Ascending aorta (tissue), 2 donors: ENCODE measurements at regions of chr9 and their contacts with region 1.

Region 1: GRCh38 chr9:101848485-101848919 is 110.1 kb upstream of the GRIN3A start:
- DNase-seq: no peak
- H3K4me3 ChIP-seq: no peak overlapping the region
- H3K27ac ChIP-seq: no peak overlapping the region
- H3K4me1 ChIP-seq: no peaks in the 10 kb centered on the region
- H3K27me3 ChIP-seq: no peaks in the 10 kb centered on the region
- CTCF ChIP-seq: no peak

Region 2: GRCh38 chr9:101449140-101449721 is 399.3 kb before region 1 on chr9:
- intact Hi-C with region 1: no loop called
- DNase-seq: peak in 1 of 2 donors; percentile 78
- H3K4me3 ChIP-seq: peak overlapping the region; percentile 52 to 70
- H3K27ac ChIP-seq: no peak overlapping the region
- H3K4me1 ChIP-seq: no peaks in the 10 kb centered on the region
- H3K27me3 ChIP-seq: no peaks in the 10 kb centered on the region
- CTCF ChIP-seq: peak; percentile 43 to 70 (median 59)

Region 3: DNA sequence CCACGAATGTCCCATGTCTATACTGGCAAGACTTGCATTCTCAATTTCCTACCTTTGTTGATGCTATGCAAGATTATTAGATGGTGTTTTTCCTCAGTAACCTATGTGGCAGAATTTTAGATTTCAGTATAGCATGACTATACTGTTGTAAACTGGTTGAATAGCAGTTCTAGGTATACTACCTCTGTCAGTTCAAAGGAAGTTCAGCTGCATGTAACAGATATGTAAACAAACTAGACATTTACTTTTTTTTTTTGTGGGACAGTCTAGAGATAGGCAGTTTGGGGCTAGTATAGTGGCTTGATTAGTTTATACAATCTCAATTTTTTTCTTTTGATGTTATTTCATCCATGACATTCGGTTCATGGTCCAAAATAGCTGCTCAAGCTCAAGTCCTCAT is 12.5 kb before region 1 on chr9:
- intact Hi-C with region 1: no loop called
- DNase-seq: no peak
- H3K4me3 ChIP-seq: no peak overlapping the region
- H3K27ac ChIP-seq: no peak overlapping the region
- H3K4me1 ChIP-seq: no peaks in the 10 kb centered on the region
- H3K27me3 ChIP-seq: no peaks in the 10 kb centered on the region
- CTCF ChIP-seq: no peak

Region 4: GRCh38 chr9:101859620-101860019 is 11.1 kb after region 1 on chr9:
- intact Hi-C with region 1: loop called (anchors 1 kb)
- DNase-seq: no peak
- H3K4me3 ChIP-seq: no peak overlapping the region
- H3K27ac ChIP-seq: no peak overlapping the region
- H3K4me1 ChIP-seq: no peaks in the 10 kb centered on the region
- H3K27me3 ChIP-seq: no peaks in the 10 kb centered on the region
- CTCF ChIP-seq: no peak

Region 5: DNA sequence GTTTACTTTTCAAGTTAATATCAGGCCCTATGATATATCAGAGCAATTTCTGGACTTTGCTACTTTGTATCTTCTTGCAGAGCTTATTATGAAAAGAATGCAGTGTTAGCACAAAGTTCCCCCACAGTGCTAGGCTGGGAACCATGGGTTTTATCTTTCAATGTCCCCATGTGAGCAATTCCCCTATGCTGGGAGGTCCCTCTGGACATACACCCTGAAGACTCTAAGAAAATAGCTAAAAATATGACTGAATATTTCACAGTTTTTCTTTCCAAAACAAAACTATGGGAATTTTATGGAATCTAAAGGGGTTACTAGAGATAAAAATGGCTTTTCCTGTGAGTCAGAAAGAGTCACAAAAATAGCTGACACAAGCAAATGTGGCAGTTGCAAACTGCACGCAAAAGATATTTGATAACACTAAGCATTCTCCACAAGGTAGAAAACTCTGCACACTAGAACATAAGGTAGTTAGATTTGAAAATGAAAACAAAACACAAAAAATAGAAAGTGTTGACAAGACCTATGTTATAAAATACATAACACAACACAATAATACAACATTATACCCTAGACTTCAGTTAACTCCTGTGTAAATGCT is 377.4 kb after region 1 on chr9:
- intact Hi-C with region 1: no loop called
- DNase-seq: no peak
- H3K4me3 ChIP-seq: no peak overlapping the region
- H3K27ac ChIP-seq: no peak overlapping the region
- H3K4me1 ChIP-seq: no peaks in the 10 kb centered on the region
- H3K27me3 ChIP-seq: no peaks in the 10 kb centered on the region
- CTCF ChIP-seq: no peak